ENCODE measurements at regions of chr10 and their contacts with region 1.

Region 1: GRCh38 chr10:101141616-101142532 is 10.8 kb downstream of the TLX1 start:
- DNase-seq: peak; percentile 86 to 94
- H3K4me3 ChIP-seq: no peak overlapping the region
- H3K27ac ChIP-seq: no peak overlapping the region
- H3K4me1 ChIP-seq: peaks cover 22 to 40% (median 33%) of the 10 kb centered on the region in 4 donors
- H3K27me3 ChIP-seq: peaks cover 47 to 100% (median 98%) of the 10 kb centered on the region in 3 donors
- CTCF ChIP-seq: peak in 5 of 7 experiments; percentile 85 to 98 (median 94)
- EP300 ChIP-seq: no peak
- POLR2A ChIP-seq: no peak

Region 2: DNA sequence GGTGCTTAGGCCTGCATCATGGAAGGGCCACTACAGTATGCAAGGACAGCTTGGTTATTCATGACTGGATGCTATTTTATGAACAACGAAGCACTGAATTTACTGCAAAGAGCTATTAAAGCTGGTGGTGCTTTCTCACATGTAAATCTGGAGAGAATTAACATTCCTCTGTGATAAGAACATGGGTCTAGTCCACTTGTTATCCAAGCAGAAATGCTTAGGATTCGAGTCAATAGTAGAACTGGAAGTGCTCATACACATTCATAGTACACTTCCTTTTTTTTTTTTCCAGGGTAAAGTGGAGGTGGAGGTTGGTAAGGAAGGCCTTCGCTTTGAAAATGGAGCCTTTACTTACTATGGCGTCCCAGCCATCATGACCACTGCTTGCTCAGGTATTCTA is 1777.7 kb before region 1 on chr10:
- intact Hi-C with region 1: no loop called
- DNase-seq: no peak
- H3K4me3 ChIP-seq: no peak overlapping the region
- H3K27ac ChIP-seq: no peak overlapping the region
- H3K4me1 ChIP-seq: no peaks in the 10 kb centered on the region
- H3K27me3 ChIP-seq: no peaks in the 10 kb centered on the region
- CTCF ChIP-seq: no peak
- EP300 ChIP-seq: no peak
- POLR2A ChIP-seq: no peak

Region 3: GRCh38 chr10:101000915-101001658 is 140.8 kb before region 1 on chr10:
- intact Hi-C with region 1: no loop called
- DNase-seq: peak; percentile 71 to 93
- H3K4me3 ChIP-seq: peak overlapping the region; percentile 68 to 89 (median 88)
- H3K27ac ChIP-seq: peak overlapping the region; percentile 97 to 100 (median 100)
- H3K4me1 ChIP-seq: peaks cover 44 to 78% (median 62%) of the 10 kb centered on the region in 4 donors
- H3K27me3 ChIP-seq: no peaks in the 10 kb centered on the region
- CTCF ChIP-seq: no peak
- EP300 ChIP-seq: peak; percentile 32
- POLR2A ChIP-seq: no peak

Region 4: DNA sequence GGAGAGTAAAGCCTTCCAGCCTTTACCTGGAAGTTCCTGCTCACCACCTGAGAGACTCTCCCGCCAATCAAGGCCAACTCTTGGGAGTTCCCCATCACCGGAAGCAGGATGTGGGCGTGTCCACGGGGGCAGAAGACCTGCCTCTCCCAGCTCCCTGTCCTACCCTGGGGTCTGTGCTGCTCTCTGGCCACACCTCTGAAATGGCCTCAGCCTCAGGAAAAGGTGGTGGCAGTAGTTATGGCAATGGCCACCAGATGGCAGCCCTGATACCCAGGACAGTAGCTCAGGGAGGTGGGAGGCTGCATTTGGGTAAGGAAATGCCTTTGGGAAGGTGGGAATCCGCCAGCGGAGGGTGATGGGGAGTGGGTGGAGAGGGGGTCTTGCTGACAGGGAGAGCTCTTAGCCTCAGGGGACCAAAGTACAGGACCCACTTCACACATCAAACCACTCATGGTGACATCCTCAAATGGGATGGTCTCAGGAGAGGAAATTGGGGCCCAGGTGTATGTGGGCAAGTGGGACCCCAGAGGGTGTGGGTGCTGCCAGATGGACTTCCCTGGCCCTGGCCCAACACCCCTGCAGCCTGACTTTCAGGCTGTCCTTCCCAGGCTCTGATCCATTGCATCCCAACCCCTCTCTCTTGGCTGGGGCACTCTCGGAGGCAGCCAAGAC is 46.2 kb before region 1 on chr10:
- intact Hi-C with region 1: loop called (anchors 5 kb)
- DNase-seq: peak; percentile 80 to 88
- H3K4me3 ChIP-seq: no peak overlapping the region
- H3K27ac ChIP-seq: no peak overlapping the region
- H3K4me1 ChIP-seq: peaks cover 0 to 5% (median 2%) of the 10 kb centered on the region in 4 donors
- H3K27me3 ChIP-seq: peaks cover 0 to 98% (median 56%) of the 10 kb centered on the region in 3 donors
- CTCF ChIP-seq: peak in 5 of 7 experiments; percentile 69 to 85 (median 78)
- EP300 ChIP-seq: no peak
- POLR2A ChIP-seq: no peak

Measured in stomach (tissue), 19 donors.